ENCODE measurements at regions of chr10 and their contacts with region 1.

Region 1: GRCh38 chr10:5385224-5385623 is 19.4 kb downstream of the TUBAL3 start:
- DNase-seq: no peak
- ATAC-seq: no peak
- H3K4me3 ChIP-seq: no peak overlapping the region
- H3K27ac ChIP-seq: no peak overlapping the region
- H3K4me1 ChIP-seq: no peaks in the 10 kb centered on the region
- H3K27me3 ChIP-seq: no peaks in the 10 kb centered on the region
- CTCF ChIP-seq: no peak

Region 2: DNA sequence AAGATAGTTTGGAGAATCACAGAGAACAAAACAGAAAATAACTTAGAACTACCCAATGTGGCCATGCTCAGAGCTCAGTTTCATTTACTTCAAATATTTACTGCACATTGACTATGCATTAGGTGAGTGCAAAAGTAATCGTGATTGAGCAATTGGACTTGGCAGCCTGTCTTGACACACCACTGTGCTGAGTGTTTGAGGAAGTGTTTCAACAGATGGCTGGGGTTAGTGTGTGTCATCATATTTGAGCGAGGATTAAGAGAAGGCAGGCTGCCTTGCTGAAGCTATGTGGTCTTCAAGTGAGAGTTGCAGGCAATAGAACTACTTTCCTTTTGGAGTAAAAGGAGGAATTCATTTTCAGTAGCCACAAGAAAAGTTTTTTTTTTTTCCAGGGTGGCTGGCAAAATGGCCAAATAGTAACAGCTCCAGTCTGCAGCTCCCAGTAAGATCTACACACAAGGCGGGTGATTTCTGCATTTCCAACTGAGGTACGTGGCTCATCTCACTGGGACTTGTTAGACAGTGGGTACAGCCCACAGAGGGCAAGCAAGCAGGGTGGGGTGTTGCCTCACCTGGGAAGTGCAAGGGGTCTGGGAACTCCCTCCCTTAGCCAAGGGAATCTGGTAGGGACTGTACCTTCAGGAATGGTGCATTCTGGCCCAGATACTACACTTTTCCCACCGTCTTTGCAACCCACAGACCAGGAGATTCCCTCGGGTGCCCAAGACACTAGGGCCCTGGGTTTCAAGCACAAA is 150.9 kb before region 1 on chr10:
- CTCF ChIA-PET with region 1: no interaction called
- POLR2A ChIA-PET with region 1: no interaction called
- intact Hi-C with region 1: no loop called
- DNase-seq: peak; percentile 67
- ATAC-seq: peak; percentile 42; the same call in 1 of the 2 replicates
- H3K4me3 ChIP-seq: no peak overlapping the region
- H3K27ac ChIP-seq: no peak overlapping the region
- H3K4me1 ChIP-seq: peaks cover 4% of the 10 kb centered on the region; the same call in 1 of the 2 replicates
- H3K27me3 ChIP-seq: no peaks in the 10 kb centered on the region
- CTCF ChIP-seq: no peak

Region 3: GRCh38 chr10:5434017-5434753 is 49.0 kb after region 1 on chr10:
- CTCF ChIA-PET with region 1: no interaction called
- POLR2A ChIA-PET with region 1: no interaction called
- intact Hi-C with region 1: loop called (anchors 1 kb)
- DNase-seq: peak; percentile 43
- ATAC-seq: peak; percentile 62
- H3K4me3 ChIP-seq: no peak overlapping the region
- H3K27ac ChIP-seq: no peak overlapping the region
- H3K4me1 ChIP-seq: no peaks in the 10 kb centered on the region
- H3K27me3 ChIP-seq: no peaks in the 10 kb centered on the region
- CTCF ChIP-seq: peak; percentile 66

Region 4: DNA sequence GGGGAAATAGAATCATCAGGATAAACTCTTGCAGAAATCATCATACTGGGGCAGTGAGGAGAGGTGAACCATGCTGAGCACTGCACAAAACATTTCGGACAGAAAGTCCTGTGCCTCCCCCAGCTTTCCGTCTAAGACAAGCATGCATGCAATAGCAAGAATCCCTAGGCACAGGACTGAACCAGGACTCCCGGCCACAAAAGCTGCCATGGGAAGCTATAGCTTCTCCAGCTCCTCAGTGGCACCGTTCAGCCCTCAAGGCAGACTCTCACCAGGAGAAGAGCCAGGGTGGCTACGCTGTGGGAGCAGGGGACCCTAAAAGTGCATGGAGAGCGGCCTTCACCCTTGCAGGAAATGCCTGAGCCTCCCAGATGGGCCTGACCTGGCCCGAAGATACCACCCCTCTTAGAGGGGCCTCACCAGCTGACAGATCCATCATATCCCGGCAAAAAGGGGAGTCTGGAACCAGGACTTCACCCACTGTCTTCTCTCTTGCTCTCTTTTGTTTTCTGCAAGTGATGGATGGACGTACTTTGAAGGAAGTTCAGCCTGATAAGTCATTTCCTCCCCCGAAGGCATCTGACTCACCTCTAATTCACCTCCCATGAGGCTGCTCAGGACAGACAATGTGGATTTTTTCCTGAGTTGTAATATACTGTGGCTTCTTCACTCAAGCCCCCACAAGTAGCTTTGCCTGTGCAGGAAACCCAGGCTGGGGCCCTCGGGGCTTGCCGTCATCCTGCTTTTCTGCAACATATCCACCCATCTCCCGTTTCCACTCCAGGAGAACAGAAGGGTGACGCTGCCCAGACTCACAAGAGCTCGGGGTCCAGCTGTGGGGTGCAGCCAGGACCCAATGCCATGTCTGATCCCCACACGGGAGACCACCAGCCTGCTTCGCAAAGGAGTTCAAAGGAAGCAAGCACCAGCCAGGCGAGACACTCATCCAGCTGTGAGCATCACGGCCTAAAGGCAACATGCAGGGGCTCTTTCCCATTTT is 210.7 kb after region 1 on chr10:
- CTCF ChIA-PET with region 1: no interaction called
- POLR2A ChIA-PET with region 1: no interaction called
- intact Hi-C with region 1: no loop called
- DNase-seq: peak; percentile 89
- ATAC-seq: peak; percentile 73
- H3K4me3 ChIP-seq: peak overlapping the region; percentile 65
- H3K27ac ChIP-seq: peak overlapping the region; percentile 100
- H3K4me1 ChIP-seq: peaks cover 39% of the 10 kb centered on the region
- H3K27me3 ChIP-seq: no peaks in the 10 kb centered on the region
- CTCF ChIP-seq: no peak

Measured in PC-3 (cell line).